Panc1 (cell line): ENCODE measurements at regions of chr11 and their contacts with region 1.

Region 1: GRCh38 chr11:94519478-94520084 is 7.3 kb downstream of the C11orf97 start:
- DNase-seq: no peak
- ATAC-seq: peak; percentile 63; the same call in 1 of the 2 replicates
- H3K4me3 ChIP-seq: no peak overlapping the region
- H3K27ac ChIP-seq: no peak overlapping the region
- H3K4me1 ChIP-seq: no peaks in the 10 kb centered on the region
- H3K27me3 ChIP-seq: peaks cover 10% of the 10 kb centered on the region
- CTCF ChIP-seq: peak; percentile 86

Region 2: DNA sequence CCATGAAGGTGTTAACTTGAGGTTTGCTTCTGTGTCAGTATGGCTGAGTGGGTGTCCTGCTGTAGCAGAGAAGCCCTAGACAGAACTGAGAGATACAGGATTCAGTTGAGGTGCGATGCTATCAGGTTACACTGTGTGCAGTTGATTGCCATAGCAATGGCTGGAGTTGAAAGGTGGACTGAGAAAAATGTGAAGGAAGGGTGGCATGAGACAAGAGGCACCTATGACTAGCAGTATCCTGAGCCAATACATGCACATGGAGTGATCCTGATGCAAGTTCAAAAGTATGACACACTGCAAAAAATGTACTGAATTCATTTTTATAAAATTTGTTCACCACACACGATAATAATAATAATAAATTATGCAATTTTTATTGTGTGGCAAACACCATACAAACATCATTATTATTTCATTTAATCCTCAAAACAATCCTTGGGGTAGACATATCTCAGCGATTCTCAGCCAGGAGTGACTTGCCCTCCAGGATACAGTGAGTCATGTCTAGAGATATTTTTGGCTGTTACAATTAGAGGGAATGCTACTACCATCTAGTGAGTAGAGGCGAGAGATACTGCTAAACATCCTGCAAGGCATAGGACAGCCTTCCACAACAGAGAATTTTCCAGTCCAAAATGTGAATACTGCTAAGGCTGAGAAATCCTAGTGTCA is 43.7 kb after region 1 on chr11:
- CTCF ChIA-PET with region 1: interaction called, 3 read pairs
- POLR2A ChIA-PET with region 1: no interaction called
- in situ Hi-C with region 1: no loop called
- intact Hi-C with region 1: loop called (anchors 2 kb)
- DNase-seq: peak; percentile 47
- ATAC-seq: peak; percentile 89
- H3K4me3 ChIP-seq: no peak overlapping the region
- H3K27ac ChIP-seq: no peak overlapping the region
- H3K4me1 ChIP-seq: peaks cover 5% of the 10 kb centered on the region; the same call in 1 of the 2 replicates
- H3K27me3 ChIP-seq: no peaks in the 10 kb centered on the region
- CTCF ChIP-seq: peak; percentile 23; the same call in 1 of the 2 replicates

Region 3: GRCh38 chr11:94602430-94603372 is 83.1 kb after region 1 on chr11:
- CTCF ChIA-PET with region 1: interaction called, 4 read pairs
- POLR2A ChIA-PET with region 1: no interaction called
- in situ Hi-C with region 1: no loop called
- intact Hi-C with region 1: loop called (anchors 5 kb)
- DNase-seq: peak; percentile 43
- ATAC-seq: peak; percentile 98
- H3K4me3 ChIP-seq: no peak overlapping the region
- H3K27ac ChIP-seq: no peak overlapping the region
- H3K4me1 ChIP-seq: peaks cover 3% of the 10 kb centered on the region; the same call in 1 of the 2 replicates
- H3K27me3 ChIP-seq: no peaks in the 10 kb centered on the region
- CTCF ChIP-seq: peak; percentile 74